WTC11 (cell line): ENCODE measurements at regions of chr11 and their contacts with region 1.

Region 1: DNA sequence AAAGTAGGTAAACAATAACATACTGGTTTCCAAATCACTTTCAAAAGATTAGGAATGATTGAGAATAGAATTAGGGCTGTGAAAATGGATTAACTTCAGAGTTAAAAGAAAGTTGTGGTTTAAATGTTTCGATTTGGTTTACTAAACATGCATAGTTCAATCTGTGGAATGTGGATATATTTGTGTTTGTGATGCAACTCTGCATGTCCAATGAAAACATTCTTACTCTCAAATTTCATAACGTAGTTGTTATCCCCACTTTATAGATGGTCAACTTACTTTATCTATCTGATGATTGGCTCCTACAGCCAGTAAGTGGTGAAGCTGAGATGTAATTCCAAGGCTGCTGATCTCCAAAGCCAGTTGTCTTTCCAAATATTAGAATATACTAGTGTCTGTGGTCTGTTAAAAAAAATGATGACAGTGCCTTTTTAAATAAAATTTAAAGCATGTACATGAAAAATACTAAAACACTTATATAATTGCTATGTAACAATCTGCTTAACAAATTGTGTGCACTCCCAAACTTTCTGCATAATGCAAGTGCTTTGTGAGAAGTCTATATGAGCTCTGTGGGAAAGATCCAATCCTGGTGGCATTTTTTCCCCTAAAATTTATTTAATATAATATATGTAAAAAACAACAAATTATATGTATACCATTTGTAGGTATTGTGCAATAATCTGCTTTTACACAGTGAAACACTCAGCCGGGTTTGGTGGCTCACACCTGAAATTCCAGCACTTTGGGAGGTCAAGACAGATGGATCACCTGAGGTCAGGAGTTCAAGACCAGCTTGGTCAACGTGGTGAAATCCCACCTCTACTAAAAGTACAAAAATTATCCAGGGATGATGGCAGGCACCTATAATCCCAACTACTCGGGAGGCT is 9.7 kb upstream of the SIK3 start:
- DNase-seq: no peak
- ATAC-seq: no peak
- H3K4me3 Mint-ChIP-seq: no peak overlapping the region
- H3K27ac Mint-ChIP-seq: no peak overlapping the region
- H3K4me1 Mint-ChIP-seq: no peaks in the 10 kb centered on the region
- H3K27me3 Mint-ChIP-seq: no peaks in the 10 kb centered on the region
- CTCF ChIP-seq: no peak

Region 2: DNA sequence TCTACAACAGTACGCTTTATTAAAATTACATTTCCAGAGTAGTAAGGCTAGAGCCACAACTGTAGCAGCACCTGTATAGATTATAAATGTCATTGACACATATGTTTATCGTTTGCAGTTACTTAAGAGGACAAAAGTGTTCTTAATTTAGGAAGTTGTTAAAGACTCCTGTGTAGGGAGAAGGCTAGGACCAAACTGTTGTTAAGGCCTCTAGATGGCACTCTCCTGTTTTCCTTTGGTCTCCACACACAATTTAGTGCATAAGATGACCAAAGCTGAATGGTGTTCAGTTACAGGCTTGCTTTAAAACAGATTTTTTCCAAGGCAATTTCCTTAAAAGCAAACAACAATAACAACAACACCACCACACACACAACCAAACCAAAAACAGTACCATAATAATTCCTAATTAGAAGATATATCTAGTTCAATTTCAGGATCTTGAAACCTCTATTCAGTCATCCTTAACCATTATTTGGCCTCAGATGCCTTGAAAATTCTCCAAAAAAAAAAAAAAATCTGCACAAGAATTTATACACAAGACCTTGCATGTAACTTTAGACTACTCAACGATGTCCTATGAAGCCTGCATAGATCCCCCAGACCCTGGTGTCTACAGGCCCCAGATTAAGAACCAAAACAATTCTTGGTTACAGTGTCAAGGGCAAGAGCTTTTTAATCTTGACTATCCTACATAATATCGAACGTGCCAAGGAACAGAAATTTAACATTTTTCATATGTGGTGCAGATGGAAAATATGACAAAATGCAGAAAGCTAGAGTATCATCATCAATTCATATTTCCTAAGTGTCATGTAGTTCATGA is 227.9 kb before region 1 on chr11:
- CTCF ChIA-PET with region 1: interaction called, 29 read pairs
- POLR2A ChIA-PET with region 1: no interaction called
- DNase-seq: no peak
- ATAC-seq: peak; percentile 85
- H3K4me3 Mint-ChIP-seq: no peak overlapping the region
- H3K27ac Mint-ChIP-seq: peak overlapping the region; percentile 11; the same call in 1 of the 2 replicates
- H3K4me1 Mint-ChIP-seq: peaks cover 3% of the 10 kb centered on the region; the same call in 1 of the 2 replicates
- H3K27me3 Mint-ChIP-seq: no peaks in the 10 kb centered on the region
- CTCF ChIP-seq: no peak

Region 3: GRCh38 chr11:117052196-117053149 is 55.5 kb before region 1 on chr11:
- CTCF ChIA-PET with region 1: no interaction called
- POLR2A ChIA-PET with region 1: no interaction called
- DNase-seq: no peak
- ATAC-seq: no peak
- H3K4me3 Mint-ChIP-seq: no peak overlapping the region
- H3K27ac Mint-ChIP-seq: peak overlapping the region; percentile 5
- H3K4me1 Mint-ChIP-seq: peaks cover 6% of the 10 kb centered on the region
- H3K27me3 Mint-ChIP-seq: no peaks in the 10 kb centered on the region
- CTCF ChIP-seq: no peak

Region 4: GRCh38 chr11:117089685-117090084 is 18.3 kb before region 1 on chr11:
- CTCF ChIA-PET with region 1: no interaction called
- POLR2A ChIA-PET with region 1: no interaction called
- DNase-seq: no peak
- ATAC-seq: no peak
- H3K4me3 Mint-ChIP-seq: no peak overlapping the region
- H3K27ac Mint-ChIP-seq: no peak overlapping the region
- H3K4me1 Mint-ChIP-seq: peaks cover 11% of the 10 kb centered on the region
- H3K27me3 Mint-ChIP-seq: no peaks in the 10 kb centered on the region
- CTCF ChIP-seq: no peak